ENCODE measurements at regions of chr15 and their contacts with region 1.

Region 1: GRCh38 chr15:58269455-58270414 is 131.6 kb downstream of the AQP9 start:
- DNase-seq: peak; percentile 70
- H3K4me3 ChIP-seq: no peak overlapping the region
- H3K27ac ChIP-seq: no peak overlapping the region
- H3K4me1 ChIP-seq: no peaks in the 10 kb centered on the region
- H3K27me3 ChIP-seq: no peaks in the 10 kb centered on the region
- CTCF ChIP-seq: peak; percentile 61

Region 2: GRCh38 chr15:58438956-58439355 is 169.2 kb after region 1 on chr15:
- intact Hi-C with region 1: no loop called
- DNase-seq: peak; percentile 71
- H3K4me3 ChIP-seq: no peak overlapping the region
- H3K27ac ChIP-seq: no peak overlapping the region
- H3K4me1 ChIP-seq: peaks cover 13% of the 10 kb centered on the region
- H3K27me3 ChIP-seq: no peaks in the 10 kb centered on the region
- CTCF ChIP-seq: no peak

Region 3: DNA sequence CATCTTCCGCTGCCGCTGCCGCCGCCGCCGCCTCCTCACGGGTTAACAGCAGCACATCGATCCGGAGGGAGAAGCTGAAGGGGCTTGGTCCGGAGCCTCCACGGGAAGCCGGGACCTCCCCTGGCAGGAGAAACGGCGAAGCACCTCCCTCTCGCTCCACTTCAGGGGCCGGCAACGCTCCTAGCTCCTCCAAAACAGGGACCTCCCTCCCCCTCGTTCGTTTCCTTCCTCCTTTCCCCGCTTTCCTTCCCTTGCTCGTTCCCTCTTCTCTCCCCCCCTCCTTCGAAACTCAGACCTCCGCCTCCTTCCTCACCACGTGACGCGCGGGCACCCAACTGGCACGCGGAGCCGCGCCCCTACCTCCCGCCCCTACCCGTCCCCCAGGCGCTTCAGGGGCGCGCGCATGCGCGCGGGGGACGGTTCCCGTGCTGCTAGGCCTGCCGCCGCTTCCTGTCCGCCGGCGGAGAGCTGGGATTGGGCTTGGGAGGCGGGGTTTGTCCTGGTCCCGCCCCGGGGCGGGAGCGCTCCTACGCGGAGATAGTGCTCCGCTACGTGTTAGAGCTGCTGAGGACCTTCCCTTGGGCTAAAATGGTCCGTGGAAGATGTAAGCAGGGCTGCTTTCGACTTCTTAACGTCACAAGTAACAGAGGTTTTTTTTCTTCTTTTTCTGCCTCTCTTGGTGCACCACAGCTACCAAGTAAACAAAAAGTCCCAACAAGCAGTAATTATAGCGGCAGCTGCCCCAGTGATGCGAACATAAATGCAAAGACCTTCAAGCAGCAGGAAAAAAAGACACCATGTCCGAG is 480.0 kb after region 1 on chr15 and contains the start of gene ADAM10:
- intact Hi-C with region 1: loop called (anchors 10 kb)
- DNase-seq: peak; percentile 99
- H3K4me3 ChIP-seq: peak within 1 kb of the TSS; percentile 67
- H3K27ac ChIP-seq: peak within 1 kb of the TSS; percentile 97
- H3K4me1 ChIP-seq: no peaks in the 10 kb centered on the region
- H3K27me3 ChIP-seq: no peaks in the 10 kb centered on the region
- CTCF ChIP-seq: no peak
- total RNA-seq, gene ADAM10: 115 to 176 TPM

Region 4: DNA sequence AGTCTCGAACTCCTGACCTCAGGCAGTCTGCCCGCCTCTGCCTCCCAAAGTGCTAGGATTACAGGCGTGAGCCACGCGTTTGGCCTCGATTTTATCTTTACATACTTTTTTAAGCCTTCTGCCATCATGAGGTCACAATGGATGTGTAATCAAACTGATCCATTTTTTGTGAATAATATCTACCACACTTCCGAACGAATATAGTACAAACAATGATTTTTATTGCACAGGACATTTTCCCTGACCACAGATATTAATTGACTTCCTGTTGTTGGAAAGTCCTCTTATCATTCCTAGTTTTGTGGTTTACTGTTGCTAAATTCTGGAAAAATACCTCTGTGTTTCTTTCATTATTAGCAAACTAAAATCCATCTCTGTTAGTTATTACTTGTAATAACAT is 570.3 kb after region 1 on chr15:
- intact Hi-C with region 1: loop called (anchors 10 kb)
- DNase-seq: no peak
- H3K4me3 ChIP-seq: no peak overlapping the region
- H3K27ac ChIP-seq: no peak overlapping the region
- H3K4me1 ChIP-seq: no peaks in the 10 kb centered on the region
- H3K27me3 ChIP-seq: no peaks in the 10 kb centered on the region
- CTCF ChIP-seq: no peak